Activated naive CD8-positive, alpha-beta T cell treated with anti-CD3 and anti-CD28 coated beads, Interleukin-2, amount 10 ng/mL, durations not matched to agents 7 days and 5 days (primary cell): ENCODE measurements at regions of chr17 and their contacts with region 1.

Region 1: GRCh38 chr17:3710951-3711383 is 12.7 kb upstream of the HASPIN start:
- DNase-seq: peak; percentile 45
- ATAC-seq: peak; percentile 99
- H3K4me3 Mint-ChIP-seq: peak overlapping the region; percentile 68
- H3K27ac Mint-ChIP-seq: peak overlapping the region; percentile 90
- H3K4me1 Mint-ChIP-seq: peaks cover 40% of the 10 kb centered on the region
- H3K27me3 Mint-ChIP-seq: no peaks in the 10 kb centered on the region

Region 2: DNA sequence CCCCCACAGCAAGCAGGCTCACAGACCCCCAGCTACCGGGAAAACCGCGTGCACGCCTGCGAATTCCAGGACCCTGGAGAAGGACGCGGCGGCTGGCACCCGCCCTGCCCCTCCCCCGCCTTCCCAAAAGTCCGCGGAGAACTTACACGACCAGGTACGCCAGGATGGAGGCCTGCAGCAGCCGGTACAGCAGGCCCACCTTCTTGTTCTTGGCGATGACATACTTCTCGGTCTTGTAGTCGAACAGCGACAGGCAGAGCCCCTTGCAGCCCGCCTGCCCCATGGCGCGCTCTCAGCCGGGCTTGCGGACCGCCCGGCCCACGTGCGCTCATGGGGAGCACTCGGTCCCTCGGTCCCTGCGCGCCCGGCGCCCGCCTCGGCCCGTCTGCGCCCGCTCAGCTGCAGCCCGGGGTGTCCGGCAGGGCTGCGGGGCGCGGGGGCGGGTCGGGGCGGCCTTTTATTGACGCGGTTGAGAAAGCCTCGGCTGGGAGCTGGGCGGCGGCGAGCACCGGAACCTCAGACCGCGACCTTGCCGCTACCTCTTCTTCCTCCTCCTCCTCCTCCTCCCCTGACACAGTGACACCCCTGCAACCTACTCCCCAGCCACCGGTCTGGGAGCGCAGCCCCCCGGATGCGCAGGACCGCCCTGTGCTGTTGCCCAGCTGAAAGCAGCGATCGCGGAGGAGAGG is 15.1 kb before region 1 on chr17 and contains the start of gene P2RX5:
- POLR2A ChIA-PET with region 1: interaction called, 33 read pairs
- DNase-seq: peak; percentile 74
- ATAC-seq: peak; percentile 75
- H3K4me3 Mint-ChIP-seq: peak within 1 kb of the TSS; percentile 98
- H3K27ac Mint-ChIP-seq: peak within 1 kb of the TSS; percentile 92
- H3K4me1 Mint-ChIP-seq: peaks cover 13% of the 10 kb centered on the region
- H3K27me3 Mint-ChIP-seq: no peaks in the 10 kb centered on the region
- total RNA-seq, gene P2RX5: 17.2 to 19.0 TPM

Region 3: DNA sequence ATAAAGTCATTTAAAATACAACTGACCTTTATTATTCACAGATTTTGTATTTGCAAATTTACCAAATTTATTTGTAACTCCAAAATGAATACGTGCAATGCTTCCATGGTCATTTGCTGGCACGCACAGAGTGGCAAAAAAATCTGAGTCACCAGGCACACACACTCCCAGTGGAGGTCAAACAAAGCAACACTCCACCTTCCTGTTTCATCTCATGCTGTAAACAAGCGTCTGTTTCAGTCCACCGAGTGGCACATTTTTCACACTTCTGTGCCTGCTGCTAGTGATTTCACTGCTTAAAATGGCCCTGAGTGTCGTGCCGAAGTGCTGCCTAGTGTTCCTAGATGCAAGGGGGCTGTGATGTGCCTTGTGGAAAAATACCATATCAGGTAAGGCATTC is 107.8 kb after region 1 on chr17:
- POLR2A ChIA-PET with region 1: no interaction called
- DNase-seq: no peak
- ATAC-seq: no peak
- H3K4me3 Mint-ChIP-seq: no peak overlapping the region
- H3K27ac Mint-ChIP-seq: no peak overlapping the region
- H3K4me1 Mint-ChIP-seq: no peaks in the 10 kb centered on the region
- H3K27me3 Mint-ChIP-seq: no peaks in the 10 kb centered on the region